MCF 10A (cell line): ENCODE measurements at regions of chr11 and their contacts with region 1.

Region 1: DNA sequence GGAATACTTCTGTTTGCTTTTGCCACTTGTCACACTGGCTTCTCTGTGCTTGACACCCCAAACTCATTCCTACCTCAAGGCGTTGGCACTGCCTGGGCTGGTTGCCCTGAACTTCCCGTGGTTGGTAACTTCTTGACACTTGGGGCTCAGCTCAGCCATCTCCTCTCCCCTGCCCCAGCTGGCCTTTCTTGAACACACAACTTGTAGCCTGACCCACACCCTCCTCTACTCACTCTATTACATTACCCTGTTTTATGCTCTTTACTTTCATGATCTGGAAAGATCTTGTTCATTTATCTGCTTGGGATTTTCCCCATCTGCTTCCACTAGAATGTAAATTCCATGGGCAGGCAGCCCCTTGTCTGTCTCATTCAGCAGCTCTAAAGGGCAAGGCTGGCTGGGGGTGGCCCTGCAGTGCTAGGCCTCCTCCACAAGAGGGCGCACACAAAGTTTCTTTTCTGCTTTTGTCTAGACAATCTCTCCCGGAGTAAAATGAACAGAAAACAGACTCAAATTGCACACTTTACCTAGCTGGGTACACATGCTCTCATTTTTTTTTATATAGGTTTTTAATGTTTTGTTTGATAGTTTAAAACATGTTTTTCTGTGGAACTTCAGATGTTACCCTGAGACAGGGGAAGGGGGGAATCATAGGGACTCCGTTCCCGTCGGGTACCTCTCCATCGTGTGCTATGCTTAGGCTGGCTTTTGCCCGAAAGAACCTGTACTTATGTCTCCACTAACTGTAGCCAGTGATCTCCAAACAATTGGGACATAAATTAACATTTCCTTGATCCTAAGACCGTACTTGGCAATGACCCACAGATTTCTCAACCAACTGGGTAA is 16.4 kb upstream of the MRGPRX2 start:
- DNase-seq: peak; percentile 69
- H3K4me3 Mint-ChIP-seq: no peak overlapping the region
- H3K27ac Mint-ChIP-seq: no peak overlapping the region
- H3K4me1 Mint-ChIP-seq: peaks cover 21% of the 10 kb centered on the region
- H3K27me3 Mint-ChIP-seq: peaks cover 21% of the 10 kb centered on the region
- CTCF ChIP-seq: peak; percentile 94

Region 2: DNA sequence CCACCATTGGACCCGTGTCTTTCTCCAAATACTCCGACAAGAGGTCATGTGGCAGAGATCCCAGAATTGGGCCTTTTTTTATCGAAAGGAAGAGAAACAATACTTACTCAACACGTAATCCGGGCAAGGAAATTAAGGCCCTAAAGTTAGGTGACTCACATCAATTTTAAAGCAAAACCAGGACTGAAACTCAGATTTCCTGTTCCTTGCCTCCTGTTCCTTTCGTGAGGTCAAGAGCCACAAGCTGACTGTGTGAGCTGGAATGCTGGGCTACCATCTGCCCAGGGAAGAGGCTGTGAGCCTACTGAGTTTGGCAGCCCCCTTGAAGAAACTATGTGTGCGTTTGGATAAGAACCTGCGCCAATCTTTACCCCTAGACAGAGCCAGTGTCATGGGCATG is 10.7 kb after region 1 on chr11:
- CTCF ChIA-PET with region 1: interaction called, 21 read pairs
- POLR2A ChIA-PET with region 1: interaction called, 3 read pairs
- intact Hi-C with region 1: no loop called
- DNase-seq: peak; percentile 53
- H3K4me3 Mint-ChIP-seq: no peak overlapping the region
- H3K27ac Mint-ChIP-seq: no peak overlapping the region
- H3K4me1 Mint-ChIP-seq: no peaks in the 10 kb centered on the region
- H3K27me3 Mint-ChIP-seq: peaks cover 51% of the 10 kb centered on the region
- CTCF ChIP-seq: no peak

Region 3: GRCh38 chr11:19116971-19117750 is 40.2 kb after region 1 on chr11 and contains the start of gene ZDHHC13:
- CTCF ChIA-PET with region 1: interaction called, 27 read pairs
- POLR2A ChIA-PET with region 1: interaction called, 3 read pairs
- intact Hi-C with region 1: loop called (anchors 1 kb)
- DNase-seq: peak; percentile 94
- H3K4me3 Mint-ChIP-seq: peak within 1 kb of the TSS; percentile 82
- H3K27ac Mint-ChIP-seq: peak within 1 kb of the TSS; percentile 69
- H3K4me1 Mint-ChIP-seq: peaks cover 16% of the 10 kb centered on the region
- H3K27me3 Mint-ChIP-seq: peaks cover 19% of the 10 kb centered on the region
- CTCF ChIP-seq: peak; percentile 34
- total RNA-seq, gene ZDHHC13: 8.3 and 12.2 TPM in 2 replicates

Region 4: GRCh38 chr11:19240420-19241259 is 163.7 kb after region 1 on chr11 and contains the start of gene E2F8:
- CTCF ChIA-PET with region 1: interaction called, 18 read pairs
- POLR2A ChIA-PET with region 1: interaction called, 3 read pairs
- intact Hi-C with region 1: loop called (anchors 5 kb)
- DNase-seq: peak; percentile 95
- H3K4me3 Mint-ChIP-seq: peak within 1 kb of the TSS; percentile 85
- H3K27ac Mint-ChIP-seq: peak within 1 kb of the TSS; percentile 42
- H3K4me1 Mint-ChIP-seq: peaks cover 18% of the 10 kb centered on the region
- H3K27me3 Mint-ChIP-seq: no peaks in the 10 kb centered on the region
- CTCF ChIP-seq: no peak
- total RNA-seq, gene E2F8: 0.88 and 1.2 TPM in 2 replicates